Colonic mucosa (tissue), 4 donors: ENCODE measurements at regions of chr14 and their contacts with region 1.

Region 1: GRCh38 chr14:34722717-34723545 is 8.5 kb upstream of the CFL2 start:
- DNase-seq: peak; percentile 33
- H3K4me3 ChIP-seq: no peak overlapping the region
- H3K27ac ChIP-seq: no peak overlapping the region
- H3K4me1 ChIP-seq: no peaks in the 10 kb centered on the region
- H3K27me3 ChIP-seq: no peaks in the 10 kb centered on the region
- CTCF ChIP-seq: peak; percentile 80

Region 2: DNA sequence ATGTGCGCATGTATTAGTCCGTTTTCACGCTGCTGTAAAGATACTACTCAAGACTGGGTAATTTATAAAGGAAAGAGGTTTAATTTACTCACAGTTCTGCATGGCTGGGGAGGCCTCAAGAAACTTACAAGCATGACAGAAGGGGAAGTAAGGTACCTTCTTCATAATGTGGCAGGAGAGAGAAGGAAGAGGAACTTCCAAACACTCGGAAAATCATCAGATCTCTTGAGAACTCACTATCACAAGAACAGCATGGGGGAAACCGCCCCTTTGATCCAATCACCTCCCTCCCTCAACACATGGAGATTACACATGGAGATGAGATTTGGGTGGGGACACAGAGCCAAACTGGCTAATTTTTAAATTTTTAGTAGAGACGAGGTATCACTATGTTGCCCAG is 51.2 kb before region 1 on chr14:
- intact Hi-C with region 1: loop called (anchors 2 kb)
- DNase-seq: no peak
- H3K4me3 ChIP-seq: no peak overlapping the region
- H3K27ac ChIP-seq: no peak overlapping the region
- H3K4me1 ChIP-seq: no peaks in the 10 kb centered on the region
- H3K27me3 ChIP-seq: no peaks in the 10 kb centered on the region
- CTCF ChIP-seq: no peak